PC-9 (cell line): ENCODE measurements at regions of chrX and their contacts with region 1.

Region 1: GRCh38 chrX:16670998-16671397 is 21.0 kb downstream of the S100G start:
- DNase-seq: peak in 1 of 2 experiments; percentile 10
- H3K4me3 ChIP-seq: no peak overlapping the region
- H3K27ac ChIP-seq: no peak overlapping the region
- H3K4me1 ChIP-seq: no peaks in the 10 kb centered on the region
- H3K27me3 ChIP-seq: no peaks in the 10 kb centered on the region
- CTCF ChIP-seq: peak; percentile 45

Region 2: GRCh38 chrX:15930585-15930984 is 740.4 kb before region 1 on chrX:
- CTCF ChIA-PET with region 1: no interaction called
- POLR2A ChIA-PET with region 1: no interaction called
- intact Hi-C with region 1: loop called (anchors 2 kb)
- DNase-seq: no peak
- H3K4me3 ChIP-seq: no peak overlapping the region
- H3K27ac ChIP-seq: no peak overlapping the region
- H3K4me1 ChIP-seq: no peaks in the 10 kb centered on the region
- H3K27me3 ChIP-seq: no peaks in the 10 kb centered on the region
- CTCF ChIP-seq: peak; percentile 27; the same call in 1 of the 2 replicates

Region 3: DNA sequence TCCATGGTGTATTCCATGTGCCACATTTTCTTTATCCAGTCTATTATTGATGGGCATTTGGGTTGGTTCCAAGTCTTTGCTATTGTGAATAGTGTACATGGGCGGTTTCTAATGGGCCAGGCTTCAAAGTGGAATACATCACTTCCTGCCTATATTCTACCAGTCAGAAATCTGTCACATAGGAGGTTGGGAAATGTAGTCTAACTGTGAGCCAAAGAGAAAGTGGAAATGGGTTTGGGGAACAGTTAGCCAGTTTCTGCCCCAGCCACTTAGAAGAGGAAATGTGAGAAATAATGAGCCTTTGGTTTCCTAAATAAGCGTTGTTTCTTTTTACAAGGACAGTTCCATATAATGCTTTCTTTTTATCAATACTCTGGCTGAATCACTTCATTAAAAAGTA is 731.3 kb before region 1 on chrX:
- CTCF ChIA-PET with region 1: no interaction called
- POLR2A ChIA-PET with region 1: no interaction called
- intact Hi-C with region 1: loop called (anchors 2 kb)
- DNase-seq: no peak
- H3K4me3 ChIP-seq: no peak overlapping the region
- H3K27ac ChIP-seq: no peak overlapping the region
- H3K4me1 ChIP-seq: no peaks in the 10 kb centered on the region
- H3K27me3 ChIP-seq: no peaks in the 10 kb centered on the region
- CTCF ChIP-seq: no peak

Region 4: DNA sequence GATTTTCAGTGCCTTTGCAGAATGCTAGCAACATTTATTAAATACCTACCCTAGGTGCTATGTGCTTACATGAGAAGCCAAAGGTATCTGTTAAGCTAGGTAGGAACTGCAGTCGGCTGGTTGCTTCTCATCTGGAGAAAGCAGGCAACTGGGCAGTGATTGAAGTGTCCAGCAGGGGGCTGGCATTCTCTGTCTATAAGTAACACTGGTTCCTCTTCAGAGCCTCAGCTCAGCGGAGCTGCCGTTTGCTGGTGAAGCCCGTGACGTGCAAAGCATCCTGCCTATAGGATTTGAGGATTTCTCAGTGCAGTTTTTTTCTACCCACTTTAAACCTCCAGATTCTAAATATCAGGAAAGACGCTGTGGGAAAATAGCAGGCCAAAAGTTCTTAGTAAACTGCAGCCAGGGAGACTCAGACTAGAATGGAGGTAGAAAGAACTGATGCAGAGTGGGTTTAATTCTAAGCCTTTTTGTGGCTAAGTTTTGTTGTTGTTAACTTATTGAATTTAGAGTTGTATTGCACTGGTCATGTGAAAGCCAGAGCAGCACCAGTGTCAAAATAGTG is 547.7 kb before region 1 on chrX and contains the start of gene GRPR:
- CTCF ChIA-PET with region 1: no interaction called
- POLR2A ChIA-PET with region 1: no interaction called
- intact Hi-C with region 1: loop called (anchors 1 kb)
- DNase-seq: peak; percentile 61 to 72
- H3K4me3 ChIP-seq: no peak within 1 kb of the TSS
- H3K27ac ChIP-seq: no peak within 1 kb of the TSS
- H3K4me1 ChIP-seq: no peaks in the 10 kb centered on the region
- H3K27me3 ChIP-seq: no peaks in the 10 kb centered on the region
- CTCF ChIP-seq: peak; percentile 80
- total RNA-seq, gene GRPR: 1.1 TPM in 1 of 2 replicates, not detected in the other

Region 5: GRCh38 chrX:16436348-16437188 is 234.4 kb before region 1 on chrX:
- CTCF ChIA-PET with region 1: no interaction called
- POLR2A ChIA-PET with region 1: no interaction called
- intact Hi-C with region 1: loop called (anchors 2 kb)
- DNase-seq: peak; percentile 42 to 60
- H3K4me3 ChIP-seq: no peak overlapping the region
- H3K27ac ChIP-seq: no peak overlapping the region
- H3K4me1 ChIP-seq: no peaks in the 10 kb centered on the region
- H3K27me3 ChIP-seq: no peaks in the 10 kb centered on the region
- CTCF ChIP-seq: peak; percentile 75

Region 6: DNA sequence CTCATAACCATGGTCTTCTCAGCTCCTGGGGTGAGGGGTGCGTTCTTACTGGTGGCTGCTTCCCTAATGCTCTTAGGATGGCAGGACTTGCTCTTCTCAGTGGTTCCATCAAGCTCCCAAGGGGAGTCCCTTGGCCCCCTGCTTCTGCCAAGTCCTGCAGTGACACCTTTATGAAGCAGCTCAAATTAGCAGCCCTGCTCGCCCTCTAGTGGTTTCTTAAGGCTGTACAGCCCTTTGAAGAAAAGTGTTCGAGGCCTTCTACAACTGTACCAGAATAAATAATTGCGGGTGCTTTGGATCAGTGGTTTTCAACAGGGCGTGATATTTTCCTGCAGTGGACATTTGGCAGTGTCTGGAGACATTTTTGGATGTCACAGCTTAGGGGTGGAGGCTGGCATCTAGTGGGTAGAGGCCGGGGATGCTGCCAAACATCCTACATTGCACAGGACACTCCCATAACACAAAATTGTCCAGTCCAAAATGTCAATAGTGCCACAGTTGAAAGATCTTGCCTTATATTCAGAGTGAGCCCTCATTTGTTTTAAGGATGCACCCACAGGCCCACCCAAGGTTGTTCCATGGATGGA is 225.7 kb before region 1 on chrX:
- CTCF ChIA-PET with region 1: no interaction called
- POLR2A ChIA-PET with region 1: interaction called, 42 read pairs
- intact Hi-C with region 1: no loop called
- DNase-seq: peak in 1 of 2 experiments; percentile 17
- H3K4me3 ChIP-seq: no peak overlapping the region
- H3K27ac ChIP-seq: no peak overlapping the region
- H3K4me1 ChIP-seq: no peaks in the 10 kb centered on the region
- H3K27me3 ChIP-seq: no peaks in the 10 kb centered on the region
- CTCF ChIP-seq: peak; percentile 73

Region 7: DNA sequence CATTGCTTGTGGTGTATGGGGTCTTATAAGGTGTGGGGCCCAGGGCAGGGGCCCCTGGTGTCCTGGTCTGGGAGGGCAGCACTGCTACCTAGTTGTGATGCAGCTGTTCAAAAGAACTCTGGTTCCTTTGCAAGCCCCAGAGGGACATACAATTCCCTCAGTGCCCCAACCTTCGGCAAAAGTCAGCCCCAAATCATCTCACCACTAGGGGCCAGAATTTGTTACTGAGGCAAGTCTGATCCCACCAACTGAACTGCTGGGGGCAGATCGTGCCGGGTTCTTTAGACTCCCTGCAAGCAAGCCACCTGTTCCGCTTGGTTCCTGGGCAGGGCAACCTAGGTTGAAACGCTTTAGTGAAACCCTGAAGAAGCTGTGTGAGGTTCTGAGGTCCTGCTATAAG is 201.1 kb before region 1 on chrX:
- CTCF ChIA-PET with region 1: interaction called, 10 read pairs
- POLR2A ChIA-PET with region 1: no interaction called
- intact Hi-C with region 1: no loop called
- DNase-seq: no peak
- H3K4me3 ChIP-seq: no peak overlapping the region
- H3K27ac ChIP-seq: no peak overlapping the region
- H3K4me1 ChIP-seq: peaks cover 20% of the 10 kb centered on the region
- H3K27me3 ChIP-seq: no peaks in the 10 kb centered on the region
- CTCF ChIP-seq: no peak